Sigmoid colon (tissue), 7 donors: ENCODE measurements at regions of chr15 and their contacts with region 1.

Region 1: DNA sequence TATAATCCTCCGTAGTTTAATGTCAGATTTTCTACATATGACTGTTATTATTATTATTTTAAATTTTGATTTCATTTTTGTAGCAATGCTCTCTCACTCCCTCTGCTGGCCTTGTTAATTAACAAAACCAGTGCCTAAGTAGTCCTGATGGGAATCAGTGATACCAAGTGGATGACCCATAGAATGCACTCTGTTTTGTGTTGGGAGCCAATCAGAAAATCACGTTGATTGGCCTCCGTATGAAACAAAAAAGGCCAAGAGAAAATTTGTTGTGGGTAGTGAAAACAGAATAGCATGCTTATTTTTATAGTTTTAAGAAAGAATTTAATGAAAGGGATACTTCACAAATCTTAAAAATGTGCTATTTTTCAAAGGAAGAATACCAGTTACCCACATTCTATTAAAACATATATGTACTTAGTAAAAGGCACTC is 34.4 kb upstream of the MEIS2 start:
- DNase-seq: no peak
- H3K4me3 ChIP-seq: no peak overlapping the region
- H3K27ac ChIP-seq: no peak overlapping the region
- H3K4me1 ChIP-seq: peaks cover 0 to 42% (median 21%) of the 10 kb centered on the region in 4 donors
- H3K27me3 ChIP-seq: no peaks in the 10 kb centered on the region
- CTCF ChIP-seq: peak; percentile 64 to 84 (median 73)
- EP300 ChIP-seq: no peak
- POLR2A ChIP-seq: no peak

Region 2: DNA sequence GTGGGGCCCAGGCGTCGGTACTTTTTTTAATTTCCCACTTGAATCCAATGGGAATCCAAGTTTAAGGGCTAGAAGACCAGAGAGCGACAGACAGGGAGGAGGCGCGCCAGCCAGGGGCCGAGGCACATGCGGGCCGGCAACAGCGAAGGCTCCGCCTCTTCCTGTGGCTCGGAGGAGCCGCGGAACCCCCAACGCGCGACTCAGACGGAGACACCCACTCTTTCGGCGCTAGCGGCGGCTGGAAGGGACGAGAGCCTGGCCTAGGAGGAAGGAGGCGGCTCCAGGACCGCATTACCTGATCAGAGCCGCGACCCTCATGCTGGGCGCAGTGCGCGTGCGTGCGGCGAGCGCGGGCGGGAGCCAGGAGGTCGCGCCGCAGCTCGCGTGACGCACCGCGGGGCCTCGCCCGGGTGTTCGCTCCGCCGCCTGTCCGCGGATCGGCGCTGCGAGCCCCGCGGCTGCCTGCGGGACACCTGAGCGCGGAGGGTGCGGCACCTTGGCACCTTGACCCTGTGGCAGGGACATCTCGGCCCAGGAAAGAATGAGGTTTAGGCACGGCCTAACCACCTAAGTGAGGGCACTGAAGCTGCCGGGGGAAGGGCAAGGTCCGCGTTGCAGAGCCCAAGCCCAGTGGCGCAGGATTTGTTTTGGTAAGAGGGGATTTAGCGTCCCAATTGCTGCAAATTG is 1588.7 kb before region 1 on chr15 and contains the start of gene DPH6:
- intact Hi-C with region 1: loop called (anchors 10 kb)
- DNase-seq: peak; percentile 90
- H3K4me3 ChIP-seq: peak within 1 kb of the TSS; percentile 68 to 76 (median 74)
- H3K27ac ChIP-seq: peak within 1 kb of the TSS; percentile 94 to 97 (median 96)
- H3K4me1 ChIP-seq: peaks cover 0 to 19% (median 15%) of the 10 kb centered on the region in 4 donors
- H3K27me3 ChIP-seq: no peaks in the 10 kb centered on the region
- CTCF ChIP-seq: no peak
- EP300 ChIP-seq: no peak
- POLR2A ChIP-seq: peak in 1 of 2 donors; percentile 29
- total RNA-seq, gene DPH6: 9.6 to 13.2 (median 10.5) TPM

Region 3: DNA sequence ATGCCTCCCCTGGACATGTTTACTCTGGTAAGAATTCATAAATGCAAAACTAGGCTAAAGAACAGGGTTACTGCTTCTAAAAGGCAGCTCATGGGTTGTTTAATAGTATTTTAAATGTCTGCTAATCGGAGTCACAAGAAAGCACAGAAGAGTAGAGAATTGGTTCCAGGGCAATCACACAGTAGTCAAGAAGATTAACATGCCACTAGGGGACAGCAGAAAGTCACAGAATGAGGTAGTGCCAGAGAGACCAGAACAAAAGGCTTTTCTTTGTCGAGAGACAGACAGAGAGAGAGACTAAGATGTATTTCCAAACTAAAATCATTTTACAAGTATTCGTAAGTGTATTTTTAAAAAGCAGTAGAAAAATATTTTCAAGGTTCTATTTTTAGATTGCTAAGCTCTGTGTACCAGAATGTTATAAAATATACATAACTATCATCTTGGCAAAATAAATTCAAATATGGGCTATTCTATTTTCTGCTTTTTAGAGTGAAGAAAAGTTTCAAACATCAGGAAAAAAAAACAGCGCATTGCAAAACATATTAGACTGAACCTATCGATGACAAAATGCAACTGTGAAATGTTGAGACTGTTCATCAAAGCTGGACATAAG is 633.5 kb before region 1 on chr15:
- intact Hi-C with region 1: loop called (anchors 2 kb)
- DNase-seq: no peak
- H3K4me3 ChIP-seq: no peak overlapping the region
- H3K27ac ChIP-seq: peak overlapping the region in 1 of 4 donors; percentile 30
- H3K4me1 ChIP-seq: peaks cover 0 to 41% (median 16%) of the 10 kb centered on the region in 4 donors
- H3K27me3 ChIP-seq: no peaks in the 10 kb centered on the region
- CTCF ChIP-seq: peak; percentile 49 to 79 (median 65)
- EP300 ChIP-seq: no peak
- POLR2A ChIP-seq: no peak

Region 4: DNA sequence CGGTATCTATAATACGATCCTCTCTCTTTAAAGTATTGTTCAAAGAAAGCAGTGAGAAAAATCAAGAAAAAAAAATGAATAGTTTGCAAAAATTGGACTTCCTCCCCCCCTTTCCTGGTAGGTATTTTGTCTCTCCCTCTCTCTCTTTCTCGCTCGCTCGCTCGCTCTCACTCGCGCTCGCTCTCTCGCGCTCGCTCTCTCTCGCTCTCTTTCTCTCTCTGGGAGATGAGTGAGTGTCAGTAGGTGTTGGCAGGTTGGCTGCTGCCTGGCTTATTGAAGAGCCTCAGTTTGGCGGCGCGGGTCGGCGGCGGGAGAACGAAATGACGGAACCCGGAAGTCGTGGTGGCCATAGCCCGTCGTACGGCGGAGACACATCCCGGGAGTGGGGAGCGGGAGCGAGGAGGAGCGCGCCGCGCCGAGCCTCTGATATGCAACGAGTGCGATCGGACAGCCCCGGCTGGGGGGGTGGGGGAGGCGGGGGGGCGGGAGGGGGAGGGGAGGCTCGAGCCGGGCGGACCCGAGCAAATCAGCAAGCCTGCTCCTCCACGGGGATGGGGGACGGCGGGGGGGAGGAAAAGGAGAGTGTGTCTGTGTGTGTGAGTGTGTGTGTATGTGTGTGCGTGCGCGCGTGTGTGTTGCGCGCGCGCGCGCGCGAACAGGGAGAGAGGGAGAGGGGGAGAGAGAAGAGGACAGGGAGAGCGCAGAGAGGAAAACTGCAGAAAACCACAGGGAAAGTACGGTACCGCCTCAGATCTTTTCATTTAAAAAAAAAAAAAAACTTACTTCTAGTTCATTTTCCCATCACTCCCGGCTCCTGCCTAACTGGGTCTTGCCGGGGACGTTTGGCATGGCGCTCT is 34.4 kb before region 1 on chr15 and contains the start of gene MEIS2:
- intact Hi-C with region 1: loop called (anchors 5 kb)
- DNase-seq: peak; percentile 98
- H3K4me3 ChIP-seq: peak within 1 kb of the TSS; percentile 83 to 87 (median 84)
- H3K27ac ChIP-seq: peak within 1 kb of the TSS; percentile 95 to 97 (median 96)
- H3K4me1 ChIP-seq: no peaks in the 10 kb centered on the region
- H3K27me3 ChIP-seq: no peaks in the 10 kb centered on the region
- CTCF ChIP-seq: no peak
- EP300 ChIP-seq: peak in 1 of 4 donors; percentile 30
- POLR2A ChIP-seq: peak; percentile 50 to 69
- total RNA-seq, gene MEIS2: 76.0 to 154 (median 85.1) TPM

Region 5: DNA sequence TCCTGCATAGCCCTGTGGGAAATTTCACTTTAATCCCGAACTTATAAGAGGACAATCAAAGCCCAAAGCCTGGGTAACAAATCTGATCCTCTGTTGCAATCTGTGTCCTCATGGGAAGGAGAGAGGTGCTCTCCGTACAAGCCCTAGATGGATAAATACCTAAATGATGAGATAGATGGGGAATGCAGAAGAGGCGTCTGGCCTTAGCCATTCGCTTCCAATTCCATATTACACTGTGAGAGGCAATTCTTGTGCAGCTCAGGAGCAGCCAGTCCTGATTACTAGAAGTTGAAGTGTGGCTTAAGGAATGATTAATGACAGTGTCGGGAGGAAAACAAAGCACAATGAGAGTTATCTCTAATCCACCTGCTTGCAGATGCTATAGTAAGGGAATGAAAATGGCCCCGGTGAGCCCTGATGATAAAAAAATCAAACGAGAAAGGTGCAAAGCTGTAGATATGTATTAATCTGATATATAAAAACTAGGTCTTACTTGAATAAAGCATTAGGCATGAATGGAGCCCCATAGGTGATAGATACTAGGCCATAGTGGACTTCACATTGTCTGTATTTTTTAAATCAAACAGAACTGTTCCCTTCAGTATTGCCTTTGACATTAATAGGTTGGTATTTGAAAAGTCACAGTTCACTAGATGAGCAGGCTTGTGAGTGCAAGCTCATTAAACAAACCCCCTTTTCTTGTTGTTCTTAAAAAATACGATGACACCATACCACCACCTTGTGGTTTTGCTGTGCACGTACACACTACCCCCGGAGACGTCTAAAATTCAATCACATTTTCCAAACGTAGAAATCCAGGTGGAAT is 745.5 kb after region 1 on chr15:
- intact Hi-C with region 1: loop called (anchors 10 kb)
- DNase-seq: no peak
- H3K4me3 ChIP-seq: no peak overlapping the region
- H3K27ac ChIP-seq: peak overlapping the region in 2 of 4 donors; percentile 48 to 66
- H3K4me1 ChIP-seq: peaks cover 0 to 32% (median 24%) of the 10 kb centered on the region in 4 donors
- H3K27me3 ChIP-seq: no peaks in the 10 kb centered on the region
- CTCF ChIP-seq: peak; percentile 32 to 77 (median 63)
- EP300 ChIP-seq: no peak
- POLR2A ChIP-seq: no peak